HCT116 (cell line): ENCODE measurements at regions of chr1 and their contacts with region 1.

Region 1: DNA sequence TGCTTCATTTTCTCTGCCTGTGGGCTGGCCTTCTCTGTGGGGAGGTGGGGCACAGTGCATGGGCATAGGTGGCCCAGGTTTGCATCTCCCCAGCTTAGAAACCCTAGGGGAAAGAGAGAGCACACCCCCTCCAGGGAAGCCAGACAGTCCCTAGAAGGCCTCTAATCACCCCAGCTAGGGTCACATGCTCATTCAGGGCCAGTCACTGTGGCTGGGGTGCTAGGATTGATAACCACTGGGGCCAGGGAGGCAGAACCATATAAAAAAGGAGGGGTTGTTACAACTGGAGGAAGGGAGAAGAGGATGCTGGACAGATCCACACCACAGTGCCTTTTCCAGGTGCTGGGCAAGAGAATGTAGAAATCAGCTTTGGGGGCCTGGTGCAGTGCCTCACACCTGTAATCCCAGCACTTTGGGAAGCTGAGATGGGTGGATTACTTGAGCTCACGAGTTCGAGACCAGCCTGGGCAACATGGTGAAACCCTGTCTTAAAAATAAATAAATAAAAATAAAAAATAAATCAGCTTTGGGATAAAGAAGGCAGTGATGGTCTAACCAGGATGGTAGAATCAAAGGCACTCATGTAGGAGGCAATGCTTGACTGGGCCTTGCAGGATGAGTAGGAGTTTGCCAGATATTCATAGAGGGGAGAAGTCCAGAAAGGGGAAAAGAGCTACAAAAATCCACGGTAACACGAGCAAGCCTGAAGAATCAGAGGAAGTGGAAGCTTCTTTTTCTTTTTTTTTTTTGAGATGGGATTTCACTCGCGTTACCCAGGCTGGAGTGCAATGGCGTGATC is 19.5 kb downstream of the FBLIM1 start:
- DNase-seq: no peak
- ATAC-seq: 0 out of 2 replicates have a peak, but pooled peaks have one; percentile 19
- H3K4me3 ChIP-seq: no peak overlapping the region
- H3K27ac ChIP-seq: no peak overlapping the region
- H3K4me1 ChIP-seq: peaks cover 7 to 17% of the 10 kb centered on the region in 2 experiments; a peak in 3 of 4 replicates
- H3K27me3 ChIP-seq: no peaks in the 10 kb centered on the region
- CTCF ChIP-seq: no peak
- POLR2A ChIP-seq: no peak
- RAD21 ChIP-seq: no peak

Region 2: GRCh38 chr1:15178571-15179484 is 599.3 kb before region 1 on chr1:
- CTCF ChIA-PET with region 1: no interaction called
- POLR2A ChIA-PET with region 1: no interaction called
- RAD21 ChIA-PET with region 1: no interaction called
- intact Hi-C with region 1: no loop called
- DNase-seq: peak; percentile 93
- ATAC-seq: peak; percentile 75
- H3K4me3 ChIP-seq: peak overlapping the region in 1 of 2 experiments; percentile 39; a peak in 2 of 4 replicates
- H3K27ac ChIP-seq: peak overlapping the region; percentile 86
- H3K4me1 ChIP-seq: peaks cover 73 to 78% of the 10 kb centered on the region in 2 experiments
- H3K27me3 ChIP-seq: no peaks in the 10 kb centered on the region
- CTCF ChIP-seq: no peak
- POLR2A ChIP-seq: no peak
- RAD21 ChIP-seq: no peak

Region 3: DNA sequence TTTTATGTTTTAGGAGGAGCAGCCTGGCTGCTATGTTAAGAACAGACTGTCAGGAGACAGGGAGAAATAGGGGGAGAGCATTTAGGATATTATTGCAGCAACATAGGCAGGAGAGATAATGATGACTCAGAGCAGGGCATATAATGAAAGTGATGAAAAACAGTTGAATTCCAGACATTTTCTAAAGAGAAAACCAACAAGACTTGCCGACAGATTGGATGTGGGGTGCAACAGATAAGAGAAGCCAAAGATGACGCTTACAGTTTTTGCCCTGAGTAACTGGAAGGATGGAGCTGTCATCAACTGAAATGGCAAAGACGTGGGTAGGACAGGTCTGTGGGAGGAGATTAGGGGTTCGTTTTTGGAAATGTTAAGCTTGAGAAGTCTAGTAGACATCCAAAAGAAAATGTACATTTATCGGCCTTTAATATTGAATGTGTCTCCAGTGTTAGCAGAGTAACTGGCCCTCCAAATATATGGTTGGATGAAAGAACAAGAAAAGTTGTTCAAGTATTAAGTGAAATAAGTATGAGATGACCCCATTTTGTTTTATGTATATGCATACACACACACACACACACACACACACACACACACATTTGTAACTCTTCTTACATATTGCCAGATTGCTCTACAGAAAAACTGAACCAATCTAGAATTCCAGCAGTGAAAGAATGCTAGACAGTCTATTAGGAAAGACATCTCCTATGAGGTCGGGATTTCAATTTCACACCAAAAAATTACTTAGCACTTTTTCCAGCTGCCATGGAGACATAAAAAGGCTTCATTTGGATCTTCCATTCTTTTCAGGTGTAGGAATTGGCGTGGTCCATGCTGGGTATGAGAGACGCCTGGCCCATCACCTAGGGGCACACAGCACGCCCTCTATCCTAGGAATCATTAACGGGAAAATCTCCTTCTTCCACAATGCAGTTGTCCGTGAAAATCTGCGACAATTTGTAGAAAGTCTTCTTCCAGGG is 234.2 kb before region 1 on chr1:
- CTCF ChIA-PET with region 1: no interaction called
- POLR2A ChIA-PET with region 1: no interaction called
- RAD21 ChIA-PET with region 1: no interaction called
- intact Hi-C with region 1: no loop called
- DNase-seq: no peak
- ATAC-seq: no peak
- H3K4me3 ChIP-seq: no peak overlapping the region
- H3K27ac ChIP-seq: no peak overlapping the region
- H3K4me1 ChIP-seq: no peaks in the 10 kb centered on the region
- H3K27me3 ChIP-seq: no peaks in the 10 kb centered on the region
- CTCF ChIP-seq: no peak
- POLR2A ChIP-seq: no peak
- RAD21 ChIP-seq: no peak

Region 4: DNA sequence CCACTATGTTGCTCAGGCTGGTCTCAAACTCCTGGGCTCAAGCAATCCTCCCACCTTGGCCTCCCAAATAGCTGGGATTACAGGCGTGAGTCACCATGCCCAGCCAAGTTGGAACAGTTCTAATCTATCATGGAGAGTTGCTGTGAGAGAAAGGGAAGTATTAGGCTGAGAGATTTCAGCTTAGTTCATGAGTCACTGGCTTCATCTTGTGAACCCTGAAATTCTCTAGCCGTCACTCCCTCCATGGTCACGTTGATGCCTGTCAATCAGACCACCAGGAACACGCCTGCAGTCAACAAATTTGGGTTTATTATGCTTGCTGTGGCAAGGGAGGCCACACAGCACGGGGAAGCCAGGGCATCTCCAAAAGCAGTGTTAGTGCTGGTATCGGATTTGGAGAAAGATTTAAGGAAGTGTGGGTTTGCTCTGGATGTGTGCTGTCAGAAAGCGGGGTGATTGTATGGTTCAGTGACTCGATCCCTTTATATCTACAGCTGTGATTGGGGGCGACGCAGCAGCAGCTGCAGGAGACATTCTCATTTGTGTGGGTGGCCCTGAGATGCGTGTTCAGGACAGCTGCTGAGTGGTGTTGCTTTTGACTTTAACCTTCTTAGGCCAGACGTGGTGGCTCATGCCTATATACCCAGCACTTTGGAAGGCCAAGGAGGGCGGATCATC is 10.7 kb after region 1 on chr1:
- CTCF ChIA-PET with region 1: interaction called, 13 read pairs
- POLR2A ChIA-PET with region 1: no interaction called
- RAD21 ChIA-PET with region 1: interaction called in 1 of 2 experiments, 3 read pairs
- intact Hi-C with region 1: no loop called
- DNase-seq: no peak
- ATAC-seq: peak; percentile 35
- H3K4me3 ChIP-seq: no peak overlapping the region
- H3K27ac ChIP-seq: peak overlapping the region; percentile 23
- H3K4me1 ChIP-seq: peaks cover 26 to 65% of the 10 kb centered on the region in 2 experiments
- H3K27me3 ChIP-seq: no peaks in the 10 kb centered on the region
- CTCF ChIP-seq: no peak
- POLR2A ChIP-seq: no peak
- RAD21 ChIP-seq: no peak

Region 5: DNA sequence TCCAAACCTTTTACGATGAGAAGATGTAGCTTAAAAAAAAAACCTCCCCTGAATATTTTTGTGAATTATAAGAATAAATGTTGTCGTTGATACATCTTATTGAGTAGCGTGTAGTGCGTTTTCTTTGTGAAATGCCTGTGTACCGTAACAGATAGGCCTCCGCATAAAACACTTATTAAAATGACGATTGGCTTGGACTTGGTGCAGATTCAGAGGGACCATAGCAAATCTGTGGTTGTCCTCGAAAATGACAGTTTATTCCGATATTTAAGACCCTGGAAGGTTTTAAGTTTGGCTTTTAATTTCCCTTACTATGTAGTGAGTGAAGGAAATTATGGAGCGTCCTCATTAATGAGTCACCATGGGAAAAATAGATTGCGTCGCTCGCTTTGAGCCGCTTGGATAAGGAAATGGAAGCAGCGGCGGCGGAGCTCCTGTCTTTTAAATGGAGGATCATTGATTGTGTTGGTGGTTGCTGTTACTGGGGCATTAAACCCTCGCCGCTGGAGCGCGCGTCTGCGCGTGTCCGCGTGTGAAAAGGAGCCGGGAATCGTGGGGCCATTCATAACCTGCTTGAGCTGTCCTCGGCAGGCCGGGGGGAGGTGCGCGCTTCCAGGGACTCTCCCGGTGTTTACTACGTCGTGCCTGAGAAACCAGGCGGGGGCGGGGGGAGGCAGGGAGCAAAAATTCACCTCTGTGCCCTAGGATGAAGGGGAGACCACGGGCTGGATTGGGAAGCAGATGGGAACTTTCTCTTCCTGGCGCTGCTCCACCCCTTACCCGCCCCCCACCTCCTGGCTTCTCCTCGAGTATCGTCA is 71.1 kb after region 1 on chr1:
- CTCF ChIA-PET with region 1: no interaction called
- POLR2A ChIA-PET with region 1: no interaction called
- RAD21 ChIA-PET with region 1: no interaction called
- intact Hi-C with region 1: no loop called
- DNase-seq: peak; percentile 69
- ATAC-seq: peak; percentile 44
- H3K4me3 ChIP-seq: peak overlapping the region; percentile 70 to 79
- H3K27ac ChIP-seq: peak overlapping the region; percentile 86
- H3K4me1 ChIP-seq: peaks cover 33 to 48% of the 10 kb centered on the region in 2 experiments
- H3K27me3 ChIP-seq: no peaks in the 10 kb centered on the region
- CTCF ChIP-seq: no peak
- POLR2A ChIP-seq: peak; percentile 31
- RAD21 ChIP-seq: no peak